ENCODE measurements at regions of chr3 and their contacts with region 1.

Region 1: DNA sequence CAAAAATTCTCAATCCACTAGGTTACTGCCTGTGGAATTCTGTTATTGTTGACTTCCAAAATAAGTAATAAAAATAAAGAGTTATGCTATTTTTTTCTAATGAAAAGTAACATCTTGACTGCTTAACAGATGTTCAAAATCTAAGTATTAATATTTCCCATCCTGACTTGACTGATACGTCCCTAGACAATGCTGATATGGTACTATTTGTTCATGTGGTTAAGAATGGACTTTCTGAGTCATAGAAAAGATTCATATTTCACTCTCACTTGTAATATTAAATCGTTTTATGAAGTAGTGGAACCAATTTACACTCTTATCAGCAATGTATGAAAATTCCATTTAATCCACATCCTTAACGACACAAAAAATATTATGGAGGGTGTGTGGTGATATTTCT is 104.8 kb upstream of the PLSCR5 start:
- DNase-seq: peak; percentile 38
- ATAC-seq: peak; percentile 62
- H3K4me3 ChIP-seq: no peak overlapping the region
- H3K27ac ChIP-seq: peak overlapping the region; percentile 44
- H3K4me1 ChIP-seq: peaks cover 44% of the 10 kb centered on the region
- H3K27me3 ChIP-seq: no peaks in the 10 kb centered on the region
- CTCF ChIP-seq: no peak

Region 2: DNA sequence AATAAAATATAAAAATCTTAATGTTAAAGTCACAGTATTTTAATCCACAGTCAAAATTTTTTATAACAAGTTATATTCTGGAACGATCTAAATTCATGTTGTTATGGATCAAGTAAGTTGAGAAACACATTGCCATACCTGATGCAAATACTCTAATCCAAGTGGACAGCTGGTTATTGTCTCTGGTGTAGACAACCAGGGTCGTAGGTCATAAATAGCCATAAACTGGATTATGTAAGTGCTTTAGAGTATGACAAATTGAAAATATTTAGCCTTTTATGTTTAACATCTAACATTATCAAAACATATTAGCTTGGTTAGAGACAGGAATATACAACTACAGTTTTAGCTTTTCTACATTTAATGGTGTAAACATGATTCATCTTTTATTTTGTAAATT is 293.6 kb before region 1 on chr3:
- CTCF ChIA-PET with region 1: no interaction called
- POLR2A ChIA-PET with region 1: no interaction called
- intact Hi-C with region 1: no loop called
- DNase-seq: no peak
- ATAC-seq: no peak
- H3K4me3 ChIP-seq: no peak overlapping the region
- H3K27ac ChIP-seq: no peak overlapping the region
- H3K4me1 ChIP-seq: peaks cover 6% of the 10 kb centered on the region
- H3K27me3 ChIP-seq: no peaks in the 10 kb centered on the region
- CTCF ChIP-seq: no peak

Region 3: DNA sequence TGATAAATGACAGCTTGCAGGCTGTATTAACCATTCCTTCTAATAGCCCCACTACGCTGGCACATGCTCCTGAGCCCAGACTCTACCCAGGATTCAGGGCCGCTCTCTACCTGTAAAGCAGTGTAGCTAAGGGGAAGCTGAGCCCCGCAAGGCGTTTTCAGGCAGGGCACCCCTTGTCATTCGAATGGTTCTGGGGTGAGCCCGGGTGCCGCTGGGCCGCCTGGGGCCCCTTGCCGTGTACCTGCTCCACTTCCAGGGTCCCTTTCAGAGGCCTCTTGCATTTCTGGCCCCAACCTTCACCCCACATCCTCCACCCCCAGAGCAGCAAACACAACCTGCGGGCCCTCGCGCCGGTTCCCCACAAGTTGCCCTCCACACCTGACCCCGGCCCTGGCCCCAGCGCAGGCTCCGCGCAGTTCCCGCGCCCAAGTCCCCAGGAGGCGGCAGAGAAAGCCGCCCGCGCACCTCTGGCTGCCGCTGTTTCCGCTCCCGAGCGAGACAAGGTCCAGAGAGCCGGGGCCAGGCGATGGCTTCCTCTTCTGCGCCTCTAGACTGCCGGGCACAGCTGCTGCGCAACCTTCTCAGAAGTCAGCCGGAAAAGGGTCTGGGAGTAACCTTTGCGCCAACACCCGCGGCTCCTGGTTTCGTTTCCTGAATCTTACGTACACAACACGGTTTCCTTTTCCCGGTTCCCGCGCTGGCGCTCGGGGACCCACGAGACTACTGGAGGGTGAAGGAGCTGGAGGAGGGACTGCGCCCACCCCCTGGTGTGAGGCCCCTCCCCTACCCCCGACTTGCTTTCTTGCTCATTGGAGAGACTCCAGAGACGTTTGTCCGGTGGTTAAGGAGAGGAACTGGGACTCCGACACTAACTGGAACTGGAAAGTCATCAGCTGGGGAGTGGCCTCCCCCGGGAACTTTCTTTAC is 165.7 kb before region 1 on chr3 and contains the start of gene PLSCR1:
- CTCF ChIA-PET with region 1: no interaction called
- POLR2A ChIA-PET with region 1: no interaction called
- intact Hi-C with region 1: loop called (anchors 5 kb)
- DNase-seq: peak; percentile 98
- ATAC-seq: peak; percentile 84
- H3K4me3 ChIP-seq: peak within 1 kb of the TSS; percentile 92
- H3K27ac ChIP-seq: peak within 1 kb of the TSS; percentile 89
- H3K4me1 ChIP-seq: peaks cover 32% of the 10 kb centered on the region
- H3K27me3 ChIP-seq: no peaks in the 10 kb centered on the region
- CTCF ChIP-seq: no peak
- total RNA-seq, gene PLSCR1: 31.4 and 48.8 TPM in 2 replicates

Region 4: GRCh38 chr3:146658841-146659240 is 51.1 kb before region 1 on chr3:
- CTCF ChIA-PET with region 1: no interaction called
- POLR2A ChIA-PET with region 1: no interaction called
- intact Hi-C with region 1: no loop called
- DNase-seq: peak; percentile 1
- ATAC-seq: no peak
- H3K4me3 ChIP-seq: no peak overlapping the region
- H3K27ac ChIP-seq: no peak overlapping the region
- H3K4me1 ChIP-seq: no peaks in the 10 kb centered on the region
- H3K27me3 ChIP-seq: peaks cover 11% of the 10 kb centered on the region
- CTCF ChIP-seq: no peak

Region 5: DNA sequence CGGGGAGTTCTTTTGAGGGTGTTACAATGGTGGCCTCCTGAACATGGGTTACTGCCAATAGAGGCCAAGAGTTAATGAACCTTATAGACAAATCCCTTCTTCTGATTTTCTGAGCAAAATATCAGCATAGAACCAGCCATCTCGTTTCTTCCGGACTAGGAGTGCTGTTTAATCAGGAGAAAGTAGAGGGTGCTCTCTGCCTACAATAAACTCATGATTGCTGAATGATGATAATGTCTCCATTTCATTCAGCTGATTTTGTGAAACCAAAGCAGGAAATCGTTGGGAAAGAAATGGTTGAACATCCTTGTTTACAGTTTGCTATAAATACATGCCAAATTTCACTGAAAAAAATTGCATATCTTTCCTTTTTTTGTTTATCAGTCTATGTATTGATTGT is 38.0 kb after region 1 on chr3:
- CTCF ChIA-PET with region 1: no interaction called
- POLR2A ChIA-PET with region 1: interaction called, 3 read pairs
- intact Hi-C with region 1: loop called (anchors 1 kb)
- DNase-seq: peak; percentile 46
- ATAC-seq: peak; percentile 25
- H3K4me3 ChIP-seq: peak overlapping the region; percentile 24
- H3K27ac ChIP-seq: peak overlapping the region; percentile 77
- H3K4me1 ChIP-seq: peaks cover 32% of the 10 kb centered on the region
- H3K27me3 ChIP-seq: no peaks in the 10 kb centered on the region
- CTCF ChIP-seq: peak; percentile 47